Right ventricle myocardium inferior (tissue), 1 donor: ENCODE measurements at regions of chr10 and their contacts with region 1.

Region 1: GRCh38 chr10:29735596-29736318 is 101.0 kb upstream of the SVIL start:
- DNase-seq: peak; percentile 94
- ATAC-seq: peak; percentile 88

Region 2: GRCh38 chr10:29535012-29535777 is 200.6 kb before region 1 on chr10:
- intact Hi-C with region 1: loop called (anchors 5 kb)
- DNase-seq: no peak
- ATAC-seq: peak; percentile 77

Region 3: DNA sequence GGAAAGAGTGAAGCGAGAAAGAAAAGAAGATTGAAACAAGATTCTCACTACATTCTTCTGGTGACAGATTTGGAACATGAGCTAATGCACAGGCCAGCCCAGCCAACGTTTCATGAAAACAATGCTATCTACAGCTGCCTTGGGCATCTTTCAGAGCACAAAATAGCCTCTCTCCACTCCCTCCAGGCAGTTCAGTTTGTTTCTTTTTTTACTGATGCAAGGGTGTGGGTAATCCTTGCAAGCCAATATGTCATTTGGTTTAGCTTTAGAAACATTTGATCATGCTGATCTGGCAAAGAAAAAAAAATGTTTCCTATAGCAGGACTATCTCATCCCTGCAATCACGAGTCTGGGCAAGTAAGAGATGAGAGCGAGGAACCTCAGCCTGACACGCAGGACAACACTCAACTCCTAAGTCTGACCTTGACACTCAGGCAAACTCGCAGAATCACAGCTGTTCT is 136.9 kb before region 1 on chr10:
- intact Hi-C with region 1: loop called (anchors 5 kb)
- DNase-seq: no peak
- ATAC-seq: peak; percentile 85

Region 4: DNA sequence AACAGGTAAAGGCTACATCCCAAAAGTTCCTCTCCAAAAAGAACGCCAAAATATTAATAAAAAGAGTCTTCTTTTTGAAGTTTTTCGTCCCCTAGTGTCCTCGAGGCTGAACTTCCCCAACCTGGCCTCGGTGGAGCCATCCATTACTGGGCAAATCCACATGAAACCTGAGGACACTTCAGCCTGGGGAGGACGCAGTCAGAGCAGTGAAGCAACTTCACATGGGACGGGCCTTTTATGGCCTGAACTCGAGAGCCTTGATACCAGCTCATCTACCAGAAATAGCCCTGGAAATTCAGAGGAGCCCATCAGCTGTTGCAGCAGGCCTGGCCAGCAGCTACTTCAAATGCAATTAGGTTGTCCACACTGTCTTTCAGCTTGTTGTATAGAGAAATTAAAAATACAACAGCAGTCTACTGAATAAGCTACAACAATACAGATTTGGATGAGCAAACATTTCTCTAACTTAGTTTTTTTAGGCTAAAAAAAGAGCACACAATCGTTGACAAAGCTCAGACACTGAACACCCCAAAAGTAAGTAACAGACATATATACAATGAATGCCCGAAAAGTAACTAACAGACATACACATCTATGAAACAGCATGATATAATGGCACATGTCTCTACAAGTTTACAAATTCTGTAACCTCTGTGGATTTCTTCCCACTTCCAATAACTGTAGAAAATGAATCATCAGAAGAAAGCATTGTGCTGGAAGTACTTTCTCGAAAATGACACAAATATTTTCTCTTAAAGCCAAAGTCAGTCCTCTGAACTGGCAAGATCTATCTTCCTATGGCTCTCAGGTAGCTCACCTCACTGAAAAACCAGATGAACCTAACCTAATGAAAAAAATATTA is 100.8 kb before region 1 on chr10 and contains the start of gene SVIL:
- intact Hi-C with region 1: loop called (anchors 5 kb)
- DNase-seq: no peak
- ATAC-seq: peak; percentile 94
- total RNA-seq, gene SVIL: 327 TPM

Region 5: DNA sequence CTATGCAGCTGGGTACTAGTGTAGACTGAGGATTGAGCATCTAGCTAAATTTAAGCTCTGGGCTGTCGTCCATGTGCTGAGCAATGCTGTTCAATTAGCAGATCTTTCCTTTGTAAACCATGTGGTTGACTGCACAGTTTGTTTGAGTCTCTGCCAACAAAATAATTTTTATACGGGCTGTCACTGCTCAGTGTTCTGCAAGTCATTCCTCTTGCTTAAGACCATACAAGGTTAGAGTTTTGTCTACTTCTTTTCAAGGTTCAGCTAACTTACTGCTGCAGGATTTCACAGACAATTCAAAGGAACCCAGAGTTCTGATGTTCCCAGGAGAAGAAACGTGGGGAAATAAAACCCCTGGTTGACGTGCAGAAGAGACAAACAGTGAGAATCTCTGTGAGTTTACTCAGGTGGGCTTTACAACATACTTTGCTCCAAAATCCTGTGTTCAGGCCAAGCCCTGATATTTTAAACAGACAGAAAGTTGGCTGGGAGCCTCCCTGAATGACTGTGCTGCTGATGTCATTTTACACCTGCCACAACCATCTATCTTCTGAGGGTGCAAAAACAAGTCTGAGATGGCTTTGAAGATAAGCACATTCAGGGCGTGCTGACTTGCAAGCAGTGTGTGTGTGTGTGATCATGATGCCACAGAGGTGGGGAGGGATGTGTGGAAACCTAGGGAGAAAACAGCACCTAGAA is 76.1 kb after region 1 on chr10:
- intact Hi-C with region 1: no loop called
- DNase-seq: no peak
- ATAC-seq: peak; percentile 79

Region 6: DNA sequence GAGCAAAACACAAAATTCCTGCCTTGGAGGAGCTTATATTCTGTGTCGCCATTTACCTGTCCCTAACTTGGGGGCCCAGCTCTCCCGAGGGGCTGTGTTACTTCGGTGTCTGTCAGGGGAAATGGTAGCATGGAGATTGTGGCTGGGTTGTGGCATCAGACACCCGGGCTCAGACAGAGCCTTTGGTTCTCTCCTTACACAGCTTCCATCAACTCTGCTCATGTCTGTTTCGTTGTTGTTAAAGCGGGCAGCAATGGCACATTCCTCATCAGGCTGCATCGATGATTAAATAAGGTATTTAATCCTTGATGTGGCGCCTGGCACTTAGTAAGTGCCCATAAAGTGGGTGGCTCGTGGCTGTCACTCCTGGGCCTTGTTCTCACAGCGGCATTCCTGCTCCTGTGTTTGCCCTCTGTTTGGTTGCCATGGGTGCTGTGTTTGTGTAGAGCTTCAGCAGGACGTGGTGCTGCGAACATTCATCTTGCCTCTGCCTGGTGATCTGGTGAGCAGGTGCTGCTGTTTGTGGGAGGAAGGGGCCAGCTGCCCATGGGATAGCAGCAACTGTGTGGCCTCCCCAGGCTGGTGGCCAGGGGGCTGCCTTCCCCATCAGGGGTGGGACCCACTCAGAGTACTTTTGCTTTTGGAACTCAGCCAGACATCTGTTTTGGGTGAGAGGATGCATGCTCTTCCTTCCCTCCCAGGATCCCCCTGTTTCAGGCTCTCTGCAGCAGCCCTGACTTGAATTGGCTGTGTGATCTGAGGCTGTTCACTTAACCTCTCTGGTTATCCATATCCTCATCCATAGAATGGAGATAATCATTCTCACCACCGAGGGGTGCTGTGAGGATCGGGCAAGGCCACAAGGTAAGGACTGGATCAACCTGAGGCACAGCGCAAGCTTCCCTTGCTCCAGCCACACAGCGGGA is 106.2 kb after region 1 on chr10:
- intact Hi-C with region 1: loop called (anchors 2 kb)
- DNase-seq: peak; percentile 79
- ATAC-seq: peak; percentile 93

Region 7: DNA sequence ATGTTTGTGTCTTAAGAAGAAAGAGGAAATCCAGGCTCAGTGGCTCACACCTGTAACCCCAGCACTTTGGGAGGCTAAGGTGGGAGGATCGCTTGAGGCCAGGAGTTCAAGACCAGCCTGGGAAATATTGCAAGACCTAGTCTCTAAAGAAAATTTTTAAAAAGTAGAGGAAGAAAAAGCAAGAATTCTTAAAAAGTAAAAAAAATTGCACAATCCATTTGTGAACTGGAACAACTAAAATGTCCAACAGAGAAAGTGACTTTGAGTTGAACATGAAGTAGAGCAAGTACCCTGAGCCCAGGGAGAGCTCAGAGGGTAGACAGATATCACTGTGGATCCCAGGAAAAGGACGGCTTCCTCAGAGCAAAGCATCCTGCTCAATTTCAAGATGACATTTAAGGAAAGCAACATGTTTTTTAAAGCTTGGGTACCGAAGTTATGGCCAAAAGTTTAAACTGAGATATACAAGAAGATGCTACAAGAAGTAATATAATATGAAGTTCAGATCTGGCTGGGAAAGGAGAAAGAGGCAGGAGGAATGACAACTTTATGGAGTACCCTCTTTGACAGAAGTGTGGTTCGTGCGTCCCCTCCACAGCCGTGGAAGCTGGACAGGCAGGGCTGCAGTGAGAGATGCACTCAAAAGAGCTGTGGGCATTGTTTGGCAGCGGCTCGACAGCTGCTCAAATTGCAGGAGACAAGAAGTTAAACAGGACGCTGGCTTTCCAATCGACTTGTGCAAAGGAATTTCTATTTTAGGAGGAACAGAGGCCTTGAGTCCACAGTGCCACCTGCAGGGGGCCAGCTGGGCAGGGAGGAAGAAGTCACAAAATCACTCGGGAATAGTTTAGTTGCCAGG is 122.3 kb after region 1 on chr10:
- intact Hi-C with region 1: loop called (anchors 2 kb)
- DNase-seq: peak; percentile 80
- ATAC-seq: peak; percentile 88

Region 8: DNA sequence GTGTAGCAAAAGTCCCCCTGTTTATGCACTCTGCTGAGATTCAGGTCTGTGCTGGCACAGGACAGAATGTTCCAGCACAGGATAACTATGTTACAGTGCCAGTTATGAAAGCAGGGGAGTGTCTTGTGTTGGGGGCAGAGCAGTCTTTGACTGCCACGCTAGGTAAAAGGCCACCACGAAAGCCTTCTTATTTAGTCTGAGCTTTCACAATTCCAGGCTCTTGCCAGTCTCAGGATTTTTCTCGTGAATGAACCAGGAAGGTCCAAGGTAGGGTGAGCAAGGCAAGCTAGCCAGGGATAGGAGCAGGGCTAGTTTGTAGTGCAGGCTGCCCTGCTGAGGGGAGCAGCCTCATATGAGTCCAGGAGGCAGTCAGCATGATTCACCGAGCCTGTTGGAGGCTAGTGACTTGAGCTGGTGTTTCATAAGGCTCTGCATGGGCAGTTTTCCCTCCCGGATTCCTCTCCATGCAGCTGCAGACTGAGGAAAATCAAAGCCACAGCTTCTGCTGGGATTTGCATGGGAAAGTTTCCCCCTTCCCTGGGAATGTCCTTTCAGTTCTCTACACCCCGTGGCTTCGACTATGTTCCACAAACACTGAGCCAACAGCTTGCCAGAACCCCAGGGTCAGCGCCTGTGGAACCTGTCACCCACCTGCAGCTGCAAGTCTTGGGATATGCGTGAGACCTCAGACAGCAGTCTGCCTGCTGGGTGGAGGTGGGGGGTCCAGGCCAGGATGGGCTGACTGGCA is 211.4 kb after region 1 on chr10:
- intact Hi-C with region 1: loop called (anchors 10 kb)
- DNase-seq: no peak
- ATAC-seq: peak; percentile 88